ENCODE measurements at regions of chr7 and their contacts with region 1.

Region 1: DNA sequence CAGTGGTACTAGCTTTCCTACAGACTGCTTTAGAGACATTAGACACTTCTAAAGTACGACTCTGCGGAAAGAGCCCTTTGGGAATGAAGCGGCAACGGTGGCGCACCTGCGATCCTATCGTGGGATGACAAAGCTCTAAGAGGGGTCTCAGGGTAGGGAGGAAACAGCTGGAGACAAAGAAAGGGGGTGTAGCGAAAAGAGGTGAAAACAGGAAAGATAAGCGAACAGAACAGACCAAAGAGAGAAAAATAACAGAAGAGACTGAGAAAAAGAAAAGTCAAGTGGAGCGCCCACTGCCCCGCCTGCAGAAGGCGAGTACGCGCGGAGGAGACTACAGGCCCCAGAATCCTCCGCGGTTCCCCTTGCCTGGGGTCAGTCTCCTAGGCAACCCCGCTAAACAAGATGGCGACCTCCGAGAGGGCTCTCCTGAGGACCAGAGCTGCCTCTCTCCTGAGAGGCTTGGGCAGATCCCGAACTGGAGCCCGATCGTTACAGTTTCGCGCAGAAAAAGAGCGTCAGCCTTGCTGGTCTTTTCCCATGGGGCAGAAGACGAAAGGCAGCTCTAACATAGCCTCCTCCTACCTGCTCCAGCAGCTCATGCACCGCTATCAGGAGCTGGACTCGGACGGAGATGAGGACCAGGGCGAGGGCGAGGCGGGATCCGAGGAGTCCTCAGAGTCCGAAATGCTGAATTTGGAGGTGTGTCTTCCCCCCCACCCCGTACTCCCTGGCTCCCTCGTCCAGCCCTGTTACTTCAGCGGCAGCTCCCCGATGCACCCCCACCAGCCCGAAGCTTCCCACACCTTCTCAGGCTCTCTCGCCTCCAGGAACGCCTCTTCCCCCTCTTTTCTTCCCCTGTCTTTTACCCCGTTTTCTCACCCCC is at the start of gene LRGUK:
- DNase-seq: peak; percentile 55 to 90 (median 72)
- ATAC-seq: peak; percentile 100
- H3K4me3 ChIP-seq: peak within 1 kb of the TSS; percentile 72
- H3K4me3 Mint-ChIP-seq: peak within 1 kb of the TSS; percentile 91
- H3K27ac ChIP-seq: no peak within 1 kb of the TSS
- H3K27ac Mint-ChIP-seq: no peak within 1 kb of the TSS
- H3K4me1 ChIP-seq: peaks cover 12% of the 10 kb centered on the region
- H3K4me1 Mint-ChIP-seq: peaks cover 21% of the 10 kb centered on the region
- H3K27me3 ChIP-seq: no peaks in the 10 kb centered on the region
- H3K27me3 Mint-ChIP-seq: peaks cover 35% of the 10 kb centered on the region
- CTCF ChIP-seq: no peak
- total RNA-seq, gene LRGUK: 0.20 to 0.27 TPM

Region 2: DNA sequence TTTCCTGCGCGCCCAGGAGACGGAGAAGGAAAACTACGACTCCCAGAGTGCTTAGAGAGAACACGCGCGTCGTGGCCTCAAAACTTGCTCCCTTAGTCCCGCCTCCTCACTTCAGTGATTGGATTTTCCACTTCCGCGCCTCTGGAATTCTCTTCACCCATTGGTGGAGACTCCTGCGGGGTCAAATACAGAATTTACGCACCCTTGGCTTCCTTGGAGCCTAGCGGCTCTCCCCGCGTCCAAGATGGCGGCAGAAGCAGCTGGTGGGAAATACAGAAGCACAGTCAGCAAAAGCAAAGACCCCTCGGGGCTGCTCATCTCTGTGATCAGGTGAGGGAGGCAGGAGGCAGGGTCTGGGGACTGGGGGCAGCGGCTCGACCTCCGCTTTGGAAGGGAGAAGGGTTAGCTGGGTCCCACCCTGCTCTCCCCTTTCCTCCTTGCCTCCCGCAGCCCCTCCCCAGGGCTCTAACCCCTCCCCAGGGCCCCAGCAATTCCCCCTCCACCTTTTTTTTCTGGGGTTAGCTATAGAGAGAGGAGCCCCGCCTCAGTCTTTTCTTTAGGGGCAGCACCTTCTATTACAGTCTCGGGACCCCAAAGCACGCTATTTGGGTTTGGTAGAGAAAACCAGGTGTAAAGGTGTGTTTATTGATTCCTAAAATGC is 874.2 kb before region 1 on chr7 and contains the start of gene EXOC4:
- CTCF ChIA-PET with region 1: no interaction called
- POLR2A ChIA-PET with region 1: no interaction called
- intact Hi-C with region 1: loop called in 1 of 2 experiments (anchors 1 kb)
- DNase-seq: peak; percentile 80 to 99 (median 87)
- ATAC-seq: peak; percentile 99
- H3K4me3 ChIP-seq: peak within 1 kb of the TSS; percentile 85
- H3K4me3 Mint-ChIP-seq: peak within 1 kb of the TSS; percentile 97
- H3K27ac ChIP-seq: peak within 1 kb of the TSS; percentile 36 to 77
- H3K27ac Mint-ChIP-seq: peak within 1 kb of the TSS; percentile 94
- H3K4me1 ChIP-seq: peaks cover 8% of the 10 kb centered on the region
- H3K4me1 Mint-ChIP-seq: peaks cover 50% of the 10 kb centered on the region
- H3K27me3 ChIP-seq: no peaks in the 10 kb centered on the region
- H3K27me3 Mint-ChIP-seq: no peaks in the 10 kb centered on the region
- CTCF ChIP-seq: no peak
- total RNA-seq, gene EXOC4: 58.0 to 59.9 TPM

Region 3: DNA sequence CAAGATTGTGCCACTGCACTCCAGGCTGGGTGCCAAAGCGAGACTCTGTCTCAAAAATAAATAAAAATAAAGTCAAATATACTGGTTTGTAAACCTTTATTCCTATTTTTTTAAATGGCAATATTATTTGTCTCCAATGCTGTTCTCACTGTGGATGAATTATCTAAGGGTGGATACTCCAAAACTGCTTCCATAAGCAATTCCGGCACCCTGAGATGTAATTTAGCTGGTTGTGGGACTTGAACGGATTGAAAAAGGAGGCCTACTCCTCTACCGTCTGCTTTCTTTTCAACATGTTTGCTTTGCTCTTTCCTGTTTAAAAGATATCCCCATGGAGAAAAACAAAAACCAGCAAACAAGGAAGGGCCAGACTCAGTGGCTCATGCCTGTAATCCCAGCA is 135.1 kb after region 1 on chr7:
- CTCF ChIA-PET with region 1: no interaction called
- POLR2A ChIA-PET with region 1: no interaction called
- intact Hi-C with region 1: no loop called
- DNase-seq: no peak
- ATAC-seq: no peak
- H3K4me3 ChIP-seq: no peak overlapping the region
- H3K4me3 Mint-ChIP-seq: no peak overlapping the region
- H3K27ac ChIP-seq: no peak overlapping the region
- H3K27ac Mint-ChIP-seq: no peak overlapping the region
- H3K4me1 ChIP-seq: no peaks in the 10 kb centered on the region
- H3K4me1 Mint-ChIP-seq: no peaks in the 10 kb centered on the region
- H3K27me3 ChIP-seq: peaks cover 0 to 3% of the 10 kb centered on the region in 2 experiments
- H3K27me3 Mint-ChIP-seq: peaks cover 8% of the 10 kb centered on the region
- CTCF ChIP-seq: no peak

Region 4: DNA sequence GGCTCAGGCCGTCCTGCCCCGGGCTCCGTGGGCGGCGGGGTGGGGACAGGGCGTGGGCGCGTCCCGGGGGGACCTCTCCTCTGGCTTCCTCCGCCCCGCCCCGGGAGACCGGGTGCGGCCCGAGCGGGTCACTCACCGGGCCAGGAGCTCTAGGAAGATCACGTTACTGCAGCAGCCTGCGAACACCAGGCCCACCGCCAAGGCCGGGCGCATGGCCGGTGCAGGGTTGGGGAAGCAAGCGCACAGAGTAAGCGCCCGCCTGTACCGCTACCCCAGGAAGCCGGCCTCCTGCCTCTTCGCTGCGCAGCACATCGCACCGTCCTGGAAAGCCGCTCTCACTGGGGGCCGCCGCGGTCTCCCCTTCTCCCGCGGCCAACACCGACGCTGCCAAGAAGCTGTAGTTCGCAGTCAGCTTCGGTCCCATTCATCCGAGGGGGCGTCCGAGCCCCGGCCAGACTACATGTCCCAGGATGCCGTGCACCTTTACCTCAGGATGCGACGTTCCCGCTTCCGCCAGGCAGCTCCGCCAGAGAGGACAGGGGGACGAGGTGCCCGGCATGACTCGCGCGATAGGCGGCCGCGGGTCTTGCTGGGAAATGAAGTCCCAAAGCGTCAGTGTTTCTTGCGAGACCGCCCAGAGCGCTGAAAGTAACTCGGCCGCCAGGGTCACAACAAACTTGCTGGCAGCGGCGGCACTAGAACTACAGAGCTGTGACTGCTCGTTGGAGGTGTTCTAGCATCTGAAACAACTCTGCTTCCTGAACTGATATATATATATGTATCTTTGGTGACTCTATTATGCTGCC is 189.5 kb after region 1 on chr7 and contains the start of gene SLC35B4:
- CTCF ChIA-PET with region 1: interaction called, 6 read pairs
- POLR2A ChIA-PET with region 1: interaction called, 8 read pairs
- intact Hi-C with region 1: loop called (anchors 1 to 2 kb)
- DNase-seq: peak; percentile 90 to 97 (median 92)
- ATAC-seq: peak; percentile 96
- H3K4me3 ChIP-seq: peak within 1 kb of the TSS; percentile 98
- H3K4me3 Mint-ChIP-seq: peak within 1 kb of the TSS; percentile 93
- H3K27ac ChIP-seq: peak within 1 kb of the TSS; percentile 36 to 65
- H3K27ac Mint-ChIP-seq: peak within 1 kb of the TSS; percentile 77
- H3K4me1 ChIP-seq: peaks cover 15% of the 10 kb centered on the region
- H3K4me1 Mint-ChIP-seq: peaks cover 26% of the 10 kb centered on the region
- H3K27me3 ChIP-seq: no peaks in the 10 kb centered on the region
- H3K27me3 Mint-ChIP-seq: no peaks in the 10 kb centered on the region
- CTCF ChIP-seq: peak; percentile 27
- total RNA-seq, gene SLC35B4: 5.8 to 7.8 TPM

Region 5: DNA sequence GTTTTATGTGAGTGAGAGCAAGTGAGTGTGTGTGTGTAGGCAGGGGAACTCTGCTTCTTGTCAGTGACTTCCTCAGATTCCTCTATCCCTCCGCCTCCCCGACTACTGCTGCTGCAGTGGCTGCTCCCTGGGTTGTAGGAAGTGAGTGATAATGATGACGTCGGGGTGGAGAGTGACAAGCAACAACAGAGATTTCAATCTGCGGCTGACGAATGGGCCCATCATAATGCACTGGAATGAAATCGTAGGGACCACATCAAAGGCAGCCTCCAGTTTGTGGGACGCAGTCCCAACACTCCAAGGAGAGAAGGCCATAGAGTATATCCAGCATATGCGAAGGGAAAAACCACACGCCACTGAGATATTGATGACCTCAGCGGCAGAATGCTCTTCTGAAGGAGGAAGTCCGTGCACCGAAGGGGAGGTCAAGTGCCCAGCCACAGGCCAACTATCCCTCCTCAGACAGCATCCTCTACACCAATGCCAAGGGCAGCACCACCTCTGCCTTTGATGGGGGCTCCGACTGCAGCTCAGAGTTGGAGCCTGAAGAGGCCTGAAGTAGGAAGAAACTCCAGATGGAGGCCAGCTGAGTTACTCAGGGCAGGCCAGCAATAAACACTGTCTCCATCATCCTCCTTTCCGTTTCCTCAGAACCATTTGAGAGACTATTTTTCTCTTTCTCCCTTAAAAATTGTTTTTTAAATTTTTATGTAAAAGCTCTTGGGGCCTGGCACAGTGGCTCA is 1523.8 kb after region 1 on chr7:
- CTCF ChIA-PET with region 1: no interaction called
- POLR2A ChIA-PET with region 1: no interaction called
- intact Hi-C with region 1: loop called in 1 of 2 experiments (anchors 10 kb)
- DNase-seq: peak in 1 of 14 experiments; percentile 18
- ATAC-seq: no peak
- H3K4me3 ChIP-seq: no peak overlapping the region
- H3K4me3 Mint-ChIP-seq: no peak overlapping the region
- H3K27ac ChIP-seq: no peak overlapping the region
- H3K27ac Mint-ChIP-seq: no peak overlapping the region
- H3K4me1 ChIP-seq: no peaks in the 10 kb centered on the region
- H3K4me1 Mint-ChIP-seq: no peaks in the 10 kb centered on the region
- H3K27me3 ChIP-seq: no peaks in the 10 kb centered on the region
- H3K27me3 Mint-ChIP-seq: no peaks in the 10 kb centered on the region
- CTCF ChIP-seq: no peak

Measured in CD4-positive, alpha-beta T cell (primary cell).